Activated CD8-positive, alpha-beta T cell treated with anti-CD3 and anti-CD28 coated beads for 36 hours (primary cell): ENCODE measurements at regions of chr3 and their contacts with region 1.

Region 1: GRCh38 chr3:9731206-9732079 is at the start of gene BRPF1:
- DNase-seq: peak; percentile 100
- ATAC-seq: peak; percentile 97
- H3K4me3 Mint-ChIP-seq: peak within 1 kb of the TSS; percentile 97
- H3K27ac Mint-ChIP-seq: peak within 1 kb of the TSS; percentile 96
- H3K4me1 Mint-ChIP-seq: peaks cover 68% of the 10 kb centered on the region
- H3K27me3 Mint-ChIP-seq: no peaks in the 10 kb centered on the region
- CTCF ChIP-seq: no peak
- total RNA-seq, gene BRPF1: 28.2 to 32.3 TPM

Region 2: GRCh38 chr3:9183811-9184460 is 547.5 kb before region 1 on chr3:
- CTCF ChIA-PET with region 1: no interaction called
- POLR2A ChIA-PET with region 1: no interaction called
- intact Hi-C with region 1: no loop called
- DNase-seq: no peak
- ATAC-seq: no peak
- H3K4me3 Mint-ChIP-seq: no peak overlapping the region
- H3K27ac Mint-ChIP-seq: no peak overlapping the region
- H3K4me1 Mint-ChIP-seq: peaks cover 19% of the 10 kb centered on the region
- H3K27me3 Mint-ChIP-seq: no peaks in the 10 kb centered on the region
- CTCF ChIP-seq: no peak

Region 3: GRCh38 chr3:9439331-9439730 is 292.1 kb before region 1 on chr3:
- CTCF ChIA-PET with region 1: no interaction called
- POLR2A ChIA-PET with region 1: no interaction called
- intact Hi-C with region 1: no loop called
- DNase-seq: no peak
- ATAC-seq: no peak
- H3K4me3 Mint-ChIP-seq: no peak overlapping the region
- H3K27ac Mint-ChIP-seq: no peak overlapping the region
- H3K4me1 Mint-ChIP-seq: peaks cover 13% of the 10 kb centered on the region
- H3K27me3 Mint-ChIP-seq: no peaks in the 10 kb centered on the region
- CTCF ChIP-seq: no peak

Region 4: GRCh38 chr3:9503283-9503682 is 228.2 kb before region 1 on chr3:
- CTCF ChIA-PET with region 1: interaction called, 52 read pairs
- POLR2A ChIA-PET with region 1: no interaction called
- intact Hi-C with region 1: no loop called
- DNase-seq: peak; percentile 89
- ATAC-seq: peak; percentile 67
- H3K4me3 Mint-ChIP-seq: no peak overlapping the region
- H3K27ac Mint-ChIP-seq: no peak overlapping the region
- H3K4me1 Mint-ChIP-seq: peaks cover 3% of the 10 kb centered on the region
- H3K27me3 Mint-ChIP-seq: peaks cover 30% of the 10 kb centered on the region
- CTCF ChIP-seq: peak; percentile 85

Region 5: GRCh38 chr3:9569054-9569453 is 162.4 kb before region 1 on chr3:
- CTCF ChIA-PET with region 1: no interaction called
- POLR2A ChIA-PET with region 1: no interaction called
- intact Hi-C with region 1: no loop called
- DNase-seq: no peak
- ATAC-seq: no peak
- H3K4me3 Mint-ChIP-seq: no peak overlapping the region
- H3K27ac Mint-ChIP-seq: no peak overlapping the region
- H3K4me1 Mint-ChIP-seq: no peaks in the 10 kb centered on the region
- H3K27me3 Mint-ChIP-seq: peaks cover 15% of the 10 kb centered on the region
- CTCF ChIP-seq: no peak

Region 6: DNA sequence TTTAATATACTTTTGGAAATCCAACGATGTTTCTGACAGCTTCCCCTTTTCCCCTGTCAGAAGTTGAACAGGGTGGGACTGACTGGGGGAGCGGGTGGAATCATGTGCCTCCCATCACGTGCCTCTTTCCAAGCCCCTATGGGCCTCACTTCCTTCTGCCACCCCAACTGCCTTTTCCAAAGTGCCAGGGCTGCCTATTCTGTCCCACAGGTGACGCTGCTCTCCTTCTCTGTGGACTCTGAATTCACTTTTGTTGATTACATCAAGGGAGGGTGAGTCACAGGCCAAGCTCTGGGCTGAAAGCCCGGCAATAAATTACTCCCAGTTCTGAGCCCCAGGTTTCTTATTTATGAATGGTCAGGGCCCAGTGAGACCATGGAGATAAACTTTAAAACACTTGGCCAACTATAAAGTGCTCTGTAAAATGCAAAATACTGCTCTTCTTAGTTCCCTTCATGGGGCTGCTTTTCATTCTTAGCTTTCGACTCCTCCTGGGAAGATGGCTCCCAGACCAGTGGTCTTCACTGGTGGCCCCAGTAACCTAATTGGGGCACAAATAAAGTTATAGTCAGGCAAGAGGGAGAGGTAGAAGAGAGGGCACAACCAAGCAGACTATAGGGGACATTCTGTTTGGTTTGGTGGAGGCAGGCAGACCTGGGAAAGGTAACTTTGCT is 15.5 kb before region 1 on chr3:
- CTCF ChIA-PET with region 1: interaction called, 20 read pairs
- POLR2A ChIA-PET with region 1: interaction called, 3 read pairs
- intact Hi-C with region 1: no loop called
- DNase-seq: peak; percentile 65
- ATAC-seq: peak; percentile 95
- H3K4me3 Mint-ChIP-seq: no peak overlapping the region
- H3K27ac Mint-ChIP-seq: no peak overlapping the region
- H3K4me1 Mint-ChIP-seq: peaks cover 7% of the 10 kb centered on the region
- H3K27me3 Mint-ChIP-seq: no peaks in the 10 kb centered on the region
- CTCF ChIP-seq: peak; percentile 37

Region 7: GRCh38 chr3:9749645-9750555 is 18.5 kb after region 1 on chr3 and contains the start of gene OGG1:
- CTCF ChIA-PET with region 1: interaction called, 15 read pairs
- POLR2A ChIA-PET with region 1: interaction called, 50 read pairs
- intact Hi-C with region 1: no loop called
- DNase-seq: peak; percentile 100
- ATAC-seq: peak; percentile 89
- H3K4me3 Mint-ChIP-seq: peak within 1 kb of the TSS; percentile 88
- H3K27ac Mint-ChIP-seq: peak within 1 kb of the TSS; percentile 94
- H3K4me1 Mint-ChIP-seq: peaks cover 45% of the 10 kb centered on the region
- H3K27me3 Mint-ChIP-seq: no peaks in the 10 kb centered on the region
- CTCF ChIP-seq: no peak
- total RNA-seq, gene OGG1: 32.4 to 39.3 TPM

Region 8: DNA sequence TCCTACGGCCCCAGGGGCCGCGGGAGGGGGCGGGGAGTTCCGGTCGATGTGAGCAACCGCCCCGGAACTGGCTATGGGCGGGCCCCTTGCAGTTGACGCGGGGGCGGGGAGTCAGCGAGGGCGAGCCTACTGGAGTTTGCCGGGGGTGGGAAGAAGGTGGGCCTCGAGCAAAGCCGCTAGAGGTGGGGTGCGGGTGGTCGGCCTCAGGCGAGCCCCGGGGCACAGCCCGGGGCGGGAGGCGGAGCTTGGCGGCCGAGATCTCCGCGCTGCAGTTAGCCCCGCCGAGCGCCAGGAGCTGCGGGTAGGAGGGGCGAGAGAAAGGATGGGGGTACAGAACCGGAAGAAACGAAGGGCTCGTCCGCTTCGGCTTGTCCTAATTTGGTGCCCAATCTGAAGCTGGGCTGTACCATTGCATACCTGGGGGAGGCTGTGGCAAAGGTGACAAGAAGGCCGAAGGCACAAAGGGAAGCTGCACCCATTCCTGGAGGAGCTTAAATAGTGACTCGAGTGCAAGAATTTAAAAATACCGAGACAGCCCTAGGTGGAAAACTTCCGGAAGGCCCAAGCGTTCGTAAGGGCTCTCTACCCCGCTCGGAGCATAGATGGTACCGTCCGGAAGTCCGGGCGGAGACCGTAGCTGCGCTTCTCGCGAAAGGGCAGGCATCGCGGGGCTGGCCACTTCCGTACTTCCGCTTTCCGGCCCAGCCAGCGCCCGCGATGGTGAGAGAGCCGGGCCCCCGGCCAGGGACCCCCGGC is 61.1 kb after region 1 on chr3 and contains the starts of genes ARPC4 and TADA3:
- CTCF ChIA-PET with region 1: interaction called, 8 read pairs
- POLR2A ChIA-PET with region 1: interaction called, 10 read pairs
- intact Hi-C with region 1: no loop called
- DNase-seq: peak; percentile 95
- ATAC-seq: peak; percentile 88
- H3K4me3 Mint-ChIP-seq: peak within 1 kb of the TSS; percentile 88
- H3K27ac Mint-ChIP-seq: peak within 1 kb of the TSS; percentile 100
- H3K4me1 Mint-ChIP-seq: peaks cover 53% of the 10 kb centered on the region
- H3K27me3 Mint-ChIP-seq: no peaks in the 10 kb centered on the region
- CTCF ChIP-seq: no peak
- total RNA-seq, gene ARPC4: 205 to 208 TPM
- total RNA-seq, gene TADA3: 57.5 to 58.3 TPM

Region 9: GRCh38 chr3:9994086-9994844 is 262.8 kb after region 1 on chr3:
- CTCF ChIA-PET with region 1: no interaction called
- POLR2A ChIA-PET with region 1: no interaction called
- intact Hi-C with region 1: no loop called
- DNase-seq: no peak
- ATAC-seq: no peak
- H3K4me3 Mint-ChIP-seq: no peak overlapping the region
- H3K27ac Mint-ChIP-seq: no peak overlapping the region
- H3K4me1 Mint-ChIP-seq: peaks cover 6% of the 10 kb centered on the region
- H3K27me3 Mint-ChIP-seq: no peaks in the 10 kb centered on the region
- CTCF ChIP-seq: no peak